CD4-positive, alpha-beta T cell (primary cell): ENCODE measurements at regions of chr10 and their contacts with region 1.

Region 1: DNA sequence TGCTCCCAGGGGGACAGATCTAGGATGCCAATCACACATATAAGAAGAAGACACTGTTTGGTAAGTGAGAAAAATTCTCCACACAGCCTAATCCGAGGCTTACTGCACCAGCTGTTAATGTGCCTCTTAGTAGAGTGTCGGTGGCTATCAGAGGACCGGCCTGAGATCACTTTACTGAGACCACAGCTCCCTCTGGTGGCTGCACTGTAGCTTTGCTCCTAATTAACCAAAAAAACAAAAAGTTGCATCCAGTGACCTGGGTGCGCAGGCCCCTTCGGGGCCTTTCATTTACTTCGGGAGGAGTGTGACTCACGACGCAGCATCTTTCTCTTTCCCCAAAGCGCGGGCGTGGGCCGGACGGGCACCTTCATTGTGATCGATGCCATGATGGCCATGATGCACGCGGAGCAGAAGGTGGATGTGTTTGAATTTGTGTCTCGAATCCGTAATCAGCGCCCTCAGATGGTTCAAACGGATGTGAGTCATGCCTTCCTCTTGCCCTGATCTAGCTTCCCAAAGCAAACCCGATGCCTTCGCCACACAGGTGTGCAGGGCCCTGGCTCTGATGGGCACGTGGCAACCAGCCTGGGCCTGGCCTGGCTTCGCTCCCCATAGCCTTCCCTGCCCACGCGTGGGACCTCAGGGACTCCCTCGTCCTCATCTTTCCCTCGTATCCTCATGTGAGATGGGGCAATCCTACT is 56.7 kb downstream of the MKI67 start:
- DNase-seq: peak; percentile 70 to 92 (median 78)
- ATAC-seq: peak; percentile 55
- H3K4me3 ChIP-seq: no peak overlapping the region
- H3K4me3 Mint-ChIP-seq: no peak overlapping the region
- H3K27ac ChIP-seq: no peak overlapping the region
- H3K27ac Mint-ChIP-seq: peak overlapping the region; percentile 59
- H3K4me1 ChIP-seq: peaks cover 44% of the 10 kb centered on the region
- H3K4me1 Mint-ChIP-seq: peaks cover 48% of the 10 kb centered on the region
- H3K27me3 ChIP-seq: no peaks in the 10 kb centered on the region
- H3K27me3 Mint-ChIP-seq: no peaks in the 10 kb centered on the region
- CTCF ChIP-seq: peak; percentile 90

Region 2: DNA sequence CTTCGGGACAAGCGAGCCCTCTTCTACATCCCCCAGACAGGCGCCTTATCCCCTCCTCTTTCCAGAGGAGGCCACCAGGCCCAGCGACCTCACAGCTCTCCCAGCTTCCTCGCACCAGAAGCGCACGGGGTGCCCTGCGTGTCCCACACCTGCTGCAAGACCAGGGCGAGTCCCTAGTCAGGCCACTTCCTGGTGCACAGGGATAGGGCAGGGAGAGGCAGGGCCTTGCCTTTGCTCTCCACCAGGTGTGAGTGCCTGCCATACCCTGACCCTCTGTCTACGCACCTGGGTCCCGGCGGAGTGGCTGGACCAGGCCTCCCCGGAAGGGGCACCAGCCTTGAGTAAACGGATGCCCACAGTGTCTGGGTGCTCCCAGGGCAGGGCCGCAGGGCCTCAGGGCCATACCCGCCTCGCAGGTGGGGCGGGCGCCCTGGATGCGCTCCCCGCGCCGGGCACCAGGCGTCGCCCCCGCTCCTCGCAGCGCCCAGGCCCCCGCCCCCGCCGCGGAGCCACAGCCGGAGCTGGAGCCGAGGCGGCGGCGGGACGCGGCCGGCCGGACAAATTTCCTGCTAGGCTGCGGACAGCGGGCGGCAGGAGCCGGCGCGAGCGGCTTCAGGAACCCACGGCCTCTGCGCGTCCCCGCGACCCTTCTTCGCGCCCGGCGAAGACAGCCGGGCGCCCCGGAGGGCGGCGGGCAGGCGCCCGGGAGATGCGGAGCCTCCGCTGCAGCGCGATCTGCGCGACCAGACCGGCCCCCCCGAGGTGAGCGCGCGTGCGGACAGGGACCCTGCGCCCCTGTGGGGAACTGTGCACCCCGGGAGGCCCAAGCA is 162.7 kb before region 1 on chr10 and contains the start of gene PTPRE:
- CTCF ChIA-PET with region 1: interaction called, 11 read pairs
- POLR2A ChIA-PET with region 1: interaction called, 7 read pairs
- intact Hi-C with region 1: loop called (anchors 1 kb)
- DNase-seq: peak; percentile 24 to 83 (median 57)
- ATAC-seq: peak; percentile 98
- H3K4me3 ChIP-seq: peak within 1 kb of the TSS; percentile 16
- H3K4me3 Mint-ChIP-seq: peak within 1 kb of the TSS; percentile 61
- H3K27ac ChIP-seq: no peak within 1 kb of the TSS
- H3K27ac Mint-ChIP-seq: no peak within 1 kb of the TSS
- H3K4me1 ChIP-seq: peaks cover 6% of the 10 kb centered on the region
- H3K4me1 Mint-ChIP-seq: no peaks in the 10 kb centered on the region
- H3K27me3 ChIP-seq: peaks cover 7 to 16% of the 10 kb centered on the region in 2 experiments
- H3K27me3 Mint-ChIP-seq: peaks cover 36% of the 10 kb centered on the region
- CTCF ChIP-seq: no peak
- total RNA-seq, gene PTPRE: 47.6 to 55.1 TPM

Region 3: GRCh38 chr10:128035557-128035973 is 33.9 kb before region 1 on chr10:
- CTCF ChIA-PET with region 1: interaction called, 83 read pairs
- POLR2A ChIA-PET with region 1: interaction called, 14 read pairs
- intact Hi-C with region 1: loop called (anchors 1 kb)
- DNase-seq: peak; percentile 41 to 81 (median 56)
- ATAC-seq: peak; percentile 73
- H3K4me3 ChIP-seq: no peak overlapping the region
- H3K4me3 Mint-ChIP-seq: no peak overlapping the region
- H3K27ac ChIP-seq: no peak overlapping the region
- H3K27ac Mint-ChIP-seq: no peak overlapping the region
- H3K4me1 ChIP-seq: peaks cover 5% of the 10 kb centered on the region
- H3K4me1 Mint-ChIP-seq: peaks cover 3% of the 10 kb centered on the region
- H3K27me3 ChIP-seq: no peaks in the 10 kb centered on the region
- H3K27me3 Mint-ChIP-seq: no peaks in the 10 kb centered on the region
- CTCF ChIP-seq: peak; percentile 78

Region 4: GRCh38 chr10:128125944-128126764 is 56.7 kb after region 1 on chr10 and contains the start of gene MKI67:
- CTCF ChIA-PET with region 1: no interaction called
- POLR2A ChIA-PET with region 1: no interaction called
- intact Hi-C with region 1: loop called in 1 of 2 experiments (anchors 5 kb)
- DNase-seq: peak; percentile 81 to 96 (median 84)
- ATAC-seq: peak; percentile 93
- H3K4me3 ChIP-seq: peak within 1 kb of the TSS; percentile 61
- H3K4me3 Mint-ChIP-seq: peak within 1 kb of the TSS; percentile 91
- H3K27ac ChIP-seq: no peak within 1 kb of the TSS
- H3K27ac Mint-ChIP-seq: peak within 1 kb of the TSS; percentile 16
- H3K4me1 ChIP-seq: peaks cover 20% of the 10 kb centered on the region
- H3K4me1 Mint-ChIP-seq: peaks cover 28% of the 10 kb centered on the region
- H3K27me3 ChIP-seq: peaks cover 16 to 28% of the 10 kb centered on the region in 2 experiments
- H3K27me3 Mint-ChIP-seq: peaks cover 41% of the 10 kb centered on the region
- CTCF ChIP-seq: no peak
- total RNA-seq, gene MKI67: 0.92 to 1.2 TPM